BJ (cell line): ENCODE measurements at regions of chr12 and their contacts with region 1.

Region 1: DNA sequence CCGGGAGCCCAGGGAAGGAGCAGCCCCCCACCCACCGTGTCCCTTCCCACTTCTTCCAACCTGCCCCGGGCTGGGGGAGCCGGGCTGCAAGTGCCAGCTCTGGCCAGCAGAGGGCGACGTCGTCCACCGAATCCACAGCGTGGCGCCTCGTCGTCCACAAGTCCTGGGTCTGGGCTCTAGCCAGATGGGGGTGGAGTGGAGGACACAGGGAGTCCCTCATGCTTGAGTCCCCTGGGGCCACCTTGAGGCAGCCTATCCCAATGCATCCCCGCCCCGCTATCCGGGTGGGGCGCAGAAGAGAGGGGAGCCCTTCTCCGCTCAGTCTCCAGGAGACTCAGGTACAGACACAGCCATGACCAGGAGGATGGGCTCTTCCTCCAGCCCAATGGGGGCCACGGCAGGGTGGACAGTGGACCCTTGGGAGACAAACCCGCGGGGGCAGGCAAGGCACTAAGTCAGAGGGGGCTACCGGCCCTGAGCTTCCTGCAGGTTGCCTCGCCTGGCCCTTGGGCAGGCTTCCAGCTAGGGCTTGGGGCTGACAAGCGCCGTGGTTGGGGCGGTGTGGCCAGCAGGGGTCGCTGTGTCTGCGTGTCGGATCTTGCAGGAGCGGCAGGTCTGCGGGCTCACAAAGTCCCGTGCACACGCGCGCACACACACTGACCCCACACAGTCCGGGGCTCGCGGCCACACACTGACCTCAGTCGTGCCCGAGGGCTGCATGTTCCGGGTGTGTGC is 5.5 kb downstream of the AQP5 start:
- DNase-seq: no peak
- H3K4me3 ChIP-seq: peak overlapping the region; percentile 38
- H3K27me3 ChIP-seq: peaks cover 44% of the 10 kb centered on the region
- CTCF ChIP-seq: peak; percentile 90

Region 2: DNA sequence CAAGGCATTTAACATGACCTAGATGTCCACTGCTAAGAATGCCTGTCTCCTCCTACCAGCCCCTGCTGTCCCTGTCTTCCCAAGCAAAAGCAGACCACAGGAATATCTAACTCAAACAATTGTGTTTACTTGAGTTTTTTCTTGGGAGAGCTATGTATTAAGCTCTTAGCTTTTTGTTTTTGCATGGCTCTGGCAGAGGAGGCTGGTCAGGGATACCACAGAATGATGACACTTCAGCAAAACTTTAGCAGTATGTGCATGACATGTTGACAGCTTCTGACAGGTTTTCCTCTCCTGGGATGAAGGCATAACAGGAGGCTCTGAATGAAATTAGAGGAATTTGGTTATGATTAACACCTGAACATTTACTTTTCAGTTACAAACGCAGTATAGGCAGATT is 218.9 kb before region 1 on chr12:
- CTCF ChIA-PET with region 1: no interaction called
- POLR2A ChIA-PET with region 1: no interaction called
- DNase-seq: no peak
- H3K4me3 ChIP-seq: no peak overlapping the region
- H3K27me3 ChIP-seq: no peaks in the 10 kb centered on the region
- CTCF ChIP-seq: no peak

Region 3: DNA sequence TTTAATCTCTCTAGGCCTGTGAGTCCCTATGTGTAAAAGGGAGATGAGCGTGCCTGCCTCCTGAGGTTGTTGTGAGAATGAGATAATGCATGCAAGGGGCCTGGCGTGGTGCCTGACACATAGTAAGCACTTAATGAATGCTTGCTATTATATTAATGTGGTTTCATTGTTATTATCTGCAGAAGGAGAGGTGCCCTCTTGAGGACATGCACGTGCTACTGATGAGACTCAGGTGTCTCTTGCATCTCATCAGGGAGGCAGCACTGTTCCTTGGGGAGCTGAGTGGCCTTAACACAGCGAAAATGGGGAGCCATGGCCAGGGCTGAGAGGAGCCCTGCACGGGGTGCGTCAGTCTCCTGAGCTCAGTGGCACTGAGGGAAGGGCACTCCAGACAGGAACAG is 94.4 kb before region 1 on chr12:
- CTCF ChIA-PET with region 1: interaction called, 91 read pairs
- POLR2A ChIA-PET with region 1: no interaction called
- DNase-seq: no peak
- H3K4me3 ChIP-seq: no peak overlapping the region
- H3K27me3 ChIP-seq: no peaks in the 10 kb centered on the region
- CTCF ChIP-seq: no peak

Region 4: DNA sequence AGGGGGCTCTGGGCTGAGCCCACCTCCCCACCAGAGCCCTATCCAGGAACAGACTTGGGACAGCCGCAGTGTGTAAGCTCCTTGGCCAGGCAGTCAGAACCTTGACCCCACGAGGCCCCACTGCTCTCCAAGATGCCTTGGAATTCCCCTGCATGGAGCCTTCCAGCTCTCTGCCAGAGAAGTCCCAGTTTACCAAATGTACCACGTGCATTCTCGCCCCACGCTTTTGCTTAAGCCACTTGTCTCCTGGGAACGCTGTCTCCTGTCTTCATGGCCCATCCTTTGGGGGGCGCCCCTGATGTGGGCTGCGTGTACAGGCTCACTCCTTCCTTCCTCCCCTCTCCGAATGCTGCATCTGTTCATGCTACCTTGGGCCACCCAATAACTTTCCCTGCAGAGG is 71.4 kb before region 1 on chr12:
- CTCF ChIA-PET with region 1: no interaction called
- POLR2A ChIA-PET with region 1: no interaction called
- DNase-seq: no peak
- H3K4me3 ChIP-seq: no peak overlapping the region
- H3K27me3 ChIP-seq: peaks cover 25% of the 10 kb centered on the region
- CTCF ChIP-seq: no peak

Region 5: DNA sequence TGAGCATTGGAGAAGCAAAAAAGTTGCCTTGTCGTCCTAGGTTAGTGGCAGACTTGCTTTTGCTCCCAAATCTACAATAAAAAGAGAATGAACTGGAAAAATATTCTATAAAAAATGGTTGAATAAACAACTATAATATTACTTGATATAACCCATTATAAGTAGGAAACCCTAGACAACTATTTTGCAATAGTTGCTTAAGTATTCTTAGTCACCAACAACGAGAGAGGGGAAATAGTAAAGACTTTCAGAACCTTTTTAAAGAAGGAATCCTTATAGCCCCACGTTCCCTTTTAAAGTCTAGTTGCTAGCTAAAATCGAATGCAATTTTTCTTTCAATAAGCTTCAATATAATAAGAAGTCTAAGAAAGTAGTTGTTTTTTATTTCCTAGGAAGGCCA is 23.1 kb after region 1 on chr12:
- CTCF ChIA-PET with region 1: interaction called, 17 read pairs
- POLR2A ChIA-PET with region 1: no interaction called
- DNase-seq: no peak
- H3K4me3 ChIP-seq: no peak overlapping the region
- H3K27me3 ChIP-seq: no peaks in the 10 kb centered on the region
- CTCF ChIP-seq: no peak

Region 6: DNA sequence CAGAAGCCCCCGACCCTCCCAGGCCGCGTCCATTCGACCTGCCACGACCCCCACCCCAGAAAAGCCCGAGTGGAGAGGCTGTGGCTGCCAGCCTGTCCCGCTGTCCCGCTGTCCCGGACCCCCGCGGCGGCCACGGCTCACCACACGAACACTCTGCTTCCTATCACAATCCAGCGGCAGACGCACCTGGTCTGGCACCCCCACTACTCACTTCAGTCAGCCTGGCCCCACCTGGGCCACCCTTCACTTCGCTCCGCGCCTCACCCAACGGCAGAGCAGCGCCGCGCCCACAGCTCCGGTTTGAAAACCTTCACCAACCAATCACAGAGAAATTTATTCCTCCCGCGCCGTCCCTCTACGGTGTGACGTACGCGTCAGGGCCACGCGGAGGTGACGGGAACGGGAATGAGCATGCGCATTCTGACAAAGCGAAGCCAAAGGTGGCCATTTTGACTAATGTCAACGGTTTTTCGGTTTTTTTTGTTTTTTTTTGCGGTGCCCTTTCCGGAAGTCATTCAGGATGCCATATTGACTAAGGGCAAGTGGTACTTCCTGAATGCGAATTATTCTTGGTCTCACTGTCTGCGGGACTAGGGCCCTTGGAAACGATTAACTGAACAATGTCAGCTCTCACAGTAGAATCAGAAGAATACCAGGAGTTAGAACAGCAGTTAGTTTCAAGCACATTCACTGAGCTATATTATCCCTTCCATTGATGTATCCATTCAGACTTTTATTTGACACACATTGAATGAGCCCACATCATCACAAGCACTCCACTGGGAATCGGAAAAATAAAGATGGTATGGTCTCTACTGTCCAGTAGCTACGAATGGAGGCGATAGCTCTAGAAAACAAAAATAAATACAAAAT is 58.2 kb after region 1 on chr12 and contains the start of gene RACGAP1:
- CTCF ChIA-PET with region 1: interaction called, 12 read pairs
- POLR2A ChIA-PET with region 1: interaction called, 4 read pairs
- DNase-seq: peak; percentile 87
- H3K4me3 ChIP-seq: peak within 1 kb of the TSS; percentile 65
- H3K27me3 ChIP-seq: no peaks in the 10 kb centered on the region
- CTCF ChIP-seq: no peak
- polyA plus RNA-seq, gene RACGAP1: 42.8 and 55.3 TPM in 2 replicates

Region 7: GRCh38 chr12:50074936-50075807 is 108.0 kb after region 1 on chr12:
- CTCF ChIA-PET with region 1: interaction called, 578 read pairs
- POLR2A ChIA-PET with region 1: no interaction called
- DNase-seq: no peak
- H3K4me3 ChIP-seq: no peak overlapping the region
- H3K27me3 ChIP-seq: no peaks in the 10 kb centered on the region
- CTCF ChIP-seq: peak; percentile 91

Region 8: DNA sequence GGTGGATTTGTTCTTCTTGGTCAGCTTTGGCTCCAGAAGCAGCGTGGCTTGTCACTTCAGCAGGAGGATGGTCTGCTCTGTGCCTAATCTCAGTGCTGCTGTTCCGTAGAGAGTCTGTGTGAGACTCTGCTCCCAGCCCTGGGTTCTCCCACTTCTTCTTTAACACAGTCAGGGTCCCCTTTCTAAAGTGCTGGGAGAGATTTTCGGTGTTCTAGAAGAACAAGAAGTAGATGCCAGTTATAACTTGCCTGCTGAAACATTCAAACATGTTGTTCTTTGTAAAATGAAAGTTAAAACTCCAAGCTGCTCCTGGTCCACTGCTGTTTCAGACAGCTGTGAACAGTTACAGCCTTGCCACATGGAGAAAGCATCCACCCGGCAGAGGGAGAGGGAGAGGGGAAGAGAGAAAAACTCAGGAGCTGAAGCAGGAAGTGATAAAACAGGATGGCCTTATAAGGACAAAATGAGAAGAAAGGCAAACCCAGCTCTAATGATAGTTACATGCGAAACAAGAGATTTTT is 255.1 kb after region 1 on chr12:
- CTCF ChIA-PET with region 1: no interaction called
- POLR2A ChIA-PET with region 1: no interaction called
- DNase-seq: peak; percentile 84
- H3K4me3 ChIP-seq: peak overlapping the region; percentile 98
- H3K27me3 ChIP-seq: no peaks in the 10 kb centered on the region
- CTCF ChIP-seq: peak; percentile 55